Right cardiac atrium (tissue), 5 donors: ENCODE measurements at regions of chr14 and their contacts with region 1.

Region 1: GRCh38 chr14:103552011-103552845 is 10.2 kb downstream of the BAG5 start:
- DNase-seq: peak; percentile 81 to 94 (median 91)
- ATAC-seq: peak; percentile 61 to 68
- H3K4me3 ChIP-seq: no peak overlapping the region
- H3K27ac ChIP-seq: peak overlapping the region; percentile 97
- H3K4me1 ChIP-seq: peaks cover 12% of the 10 kb centered on the region
- H3K27me3 ChIP-seq: no peaks in the 10 kb centered on the region

Region 2: GRCh38 chr14:103343905-103344797 is 208.1 kb before region 1 on chr14:
- intact Hi-C with region 1: no loop called
- DNase-seq: no peak
- ATAC-seq: no peak
- H3K4me3 ChIP-seq: no peak overlapping the region
- H3K27ac ChIP-seq: no peak overlapping the region
- H3K4me1 ChIP-seq: no peaks in the 10 kb centered on the region
- H3K27me3 ChIP-seq: no peaks in the 10 kb centered on the region

Region 3: GRCh38 chr14:103518422-103519042 is 33.7 kb before region 1 on chr14:
- intact Hi-C with region 1: loop called in 2 of 4 experiments (anchors 2 to 5 kb)
- DNase-seq: peak; percentile 75 to 91 (median 91)
- ATAC-seq: peak; percentile 28 to 49
- H3K4me3 ChIP-seq: no peak overlapping the region
- H3K27ac ChIP-seq: no peak overlapping the region
- H3K4me1 ChIP-seq: peaks cover 7% of the 10 kb centered on the region
- H3K27me3 ChIP-seq: no peaks in the 10 kb centered on the region

Region 4: DNA sequence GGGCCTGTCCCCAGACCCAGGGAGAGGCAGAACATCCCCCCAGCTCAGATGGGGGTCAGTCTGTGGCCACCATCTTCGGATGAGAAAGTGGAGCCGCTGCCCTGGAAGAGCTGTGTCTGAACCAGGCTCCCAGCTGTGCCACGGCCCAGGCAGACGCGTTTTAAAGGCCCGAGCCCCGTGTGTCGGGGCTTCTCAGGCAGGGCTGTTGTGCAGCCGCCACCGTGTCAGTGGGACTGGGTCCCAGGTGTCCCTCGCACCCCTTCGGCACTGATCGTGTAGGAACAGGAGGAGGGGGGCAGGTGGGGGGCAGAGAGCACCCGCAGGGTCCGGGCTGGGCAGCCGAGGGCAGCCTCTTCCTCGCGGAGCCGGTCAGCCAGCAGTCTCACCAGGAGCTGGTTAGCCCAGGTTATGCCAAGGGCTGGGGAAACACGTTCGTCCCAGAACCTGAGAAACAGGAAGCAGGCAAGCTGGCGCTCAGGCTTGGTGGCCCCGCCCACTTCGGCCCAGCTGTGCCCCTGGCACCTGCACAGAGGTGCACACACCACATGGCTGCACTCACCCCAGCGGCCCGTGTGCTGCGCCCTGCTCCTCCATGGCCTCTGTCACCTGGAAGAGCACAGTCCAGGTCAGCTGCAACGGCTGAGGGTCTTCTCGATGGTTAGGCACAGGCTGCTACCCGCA is 146.5 kb after region 1 on chr14:
- intact Hi-C with region 1: no loop called
- DNase-seq: peak in 2 of 3 donors; percentile 54 to 59
- ATAC-seq: no peak
- H3K4me3 ChIP-seq: no peak overlapping the region
- H3K27ac ChIP-seq: no peak overlapping the region
- H3K4me1 ChIP-seq: peaks cover 8% of the 10 kb centered on the region
- H3K27me3 ChIP-seq: no peaks in the 10 kb centered on the region